Calu3 (cell line): ENCODE measurements at regions of chr5 and their contacts with region 1.

Region 1: DNA sequence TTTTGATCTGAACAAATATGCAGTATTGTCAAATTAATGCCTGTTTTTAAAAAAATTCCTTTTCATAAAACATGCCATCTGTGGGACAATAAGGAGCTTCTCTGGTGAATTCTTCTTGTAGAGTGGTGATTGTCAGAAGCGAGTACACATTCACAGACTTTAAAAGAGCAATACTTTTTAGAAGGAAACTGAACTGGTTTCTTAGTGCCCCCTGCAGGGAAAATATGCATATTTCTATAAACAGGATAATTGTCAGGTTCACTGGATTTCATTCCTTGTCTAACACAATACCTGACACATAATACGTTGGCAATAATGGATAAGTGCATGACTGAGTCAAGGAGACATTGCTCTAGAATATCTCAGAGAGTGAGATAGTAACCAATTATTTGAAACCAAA is 133.7 kb downstream of the KIF4B start:
- DNase-seq: no peak
- H3K4me3 Mint-ChIP-seq: no peak overlapping the region
- H3K27ac Mint-ChIP-seq: no peak overlapping the region
- H3K4me1 Mint-ChIP-seq: no peaks in the 10 kb centered on the region
- H3K27me3 Mint-ChIP-seq: peaks cover 43% of the 10 kb centered on the region
- CTCF ChIP-seq: no peak

Region 2: DNA sequence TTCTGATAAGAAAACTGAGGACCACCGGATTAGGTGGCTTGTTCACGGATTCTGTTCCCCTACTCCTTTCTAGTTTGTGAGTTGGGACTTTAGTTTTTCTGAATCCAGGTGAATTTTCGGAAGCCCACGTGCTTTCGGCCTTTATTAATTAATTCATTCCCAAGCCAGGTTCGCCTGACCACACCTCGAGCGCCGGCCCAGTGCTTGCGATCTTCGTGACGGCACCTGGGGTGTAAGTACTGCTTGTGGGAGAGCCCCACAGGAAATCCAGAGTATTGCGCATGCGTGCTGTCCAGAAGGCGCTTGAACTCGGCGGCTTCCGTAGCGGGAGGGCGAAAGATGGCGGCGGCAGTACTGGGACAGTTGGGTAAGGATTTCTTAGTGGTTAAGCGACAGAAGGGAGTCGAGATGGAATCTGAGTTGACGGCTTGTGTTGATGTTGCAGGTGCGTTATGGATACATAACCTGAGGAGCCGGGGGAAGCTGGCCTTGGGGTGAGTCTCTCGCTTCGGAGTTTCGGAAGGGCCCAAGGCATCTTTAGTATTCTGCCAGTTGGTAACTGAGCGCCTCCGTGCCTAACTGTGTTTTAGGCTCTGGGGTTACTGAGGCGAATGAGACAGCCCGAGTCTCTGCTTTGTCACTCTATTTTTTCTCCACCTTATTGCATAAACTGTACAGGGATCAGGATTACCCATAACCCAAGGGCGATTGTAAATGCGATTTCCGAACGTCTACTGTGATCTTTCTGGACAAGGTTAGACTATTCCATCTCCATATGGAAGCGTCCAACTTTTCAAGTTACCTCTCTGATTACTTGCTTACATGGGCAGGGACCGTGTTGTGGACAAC is 206.2 kb before region 1 on chr5 and contains the start of gene MRPL22:
- CTCF ChIA-PET with region 1: no interaction called
- intact Hi-C with region 1: loop called (anchors 10 kb)
- DNase-seq: peak; percentile 95
- H3K4me3 Mint-ChIP-seq: peak within 1 kb of the TSS; percentile 96
- H3K27ac Mint-ChIP-seq: peak within 1 kb of the TSS; percentile 94
- H3K4me1 Mint-ChIP-seq: peaks cover 8% of the 10 kb centered on the region
- H3K27me3 Mint-ChIP-seq: no peaks in the 10 kb centered on the region
- CTCF ChIP-seq: no peak
- total RNA-seq, gene MRPL22: 73.8 and 80.6 TPM in 2 replicates

Region 3: DNA sequence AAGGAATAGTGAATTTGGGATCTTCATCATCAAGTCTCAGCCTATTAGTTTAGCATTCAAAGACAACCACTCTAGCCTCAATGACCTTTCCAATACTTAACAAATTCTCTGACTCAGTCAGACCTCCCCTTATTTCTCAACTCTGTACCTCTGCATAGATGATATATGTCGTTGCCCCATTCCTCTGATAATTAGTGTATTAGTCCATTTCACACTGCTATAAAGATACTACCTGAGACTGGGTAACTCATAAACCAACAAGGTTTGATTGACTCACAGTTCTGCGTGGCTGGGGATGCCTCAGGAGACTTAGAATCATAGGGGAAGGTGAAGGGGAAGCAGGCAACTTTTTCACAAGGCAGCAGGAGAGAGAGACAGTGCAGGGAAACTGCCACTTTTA is 197.4 kb before region 1 on chr5:
- CTCF ChIA-PET with region 1: interaction called, 13 read pairs
- intact Hi-C with region 1: loop called (anchors 10 kb)
- DNase-seq: no peak
- H3K4me3 Mint-ChIP-seq: no peak overlapping the region
- H3K27ac Mint-ChIP-seq: no peak overlapping the region
- H3K4me1 Mint-ChIP-seq: no peaks in the 10 kb centered on the region
- H3K27me3 Mint-ChIP-seq: no peaks in the 10 kb centered on the region
- CTCF ChIP-seq: no peak

Region 4: DNA sequence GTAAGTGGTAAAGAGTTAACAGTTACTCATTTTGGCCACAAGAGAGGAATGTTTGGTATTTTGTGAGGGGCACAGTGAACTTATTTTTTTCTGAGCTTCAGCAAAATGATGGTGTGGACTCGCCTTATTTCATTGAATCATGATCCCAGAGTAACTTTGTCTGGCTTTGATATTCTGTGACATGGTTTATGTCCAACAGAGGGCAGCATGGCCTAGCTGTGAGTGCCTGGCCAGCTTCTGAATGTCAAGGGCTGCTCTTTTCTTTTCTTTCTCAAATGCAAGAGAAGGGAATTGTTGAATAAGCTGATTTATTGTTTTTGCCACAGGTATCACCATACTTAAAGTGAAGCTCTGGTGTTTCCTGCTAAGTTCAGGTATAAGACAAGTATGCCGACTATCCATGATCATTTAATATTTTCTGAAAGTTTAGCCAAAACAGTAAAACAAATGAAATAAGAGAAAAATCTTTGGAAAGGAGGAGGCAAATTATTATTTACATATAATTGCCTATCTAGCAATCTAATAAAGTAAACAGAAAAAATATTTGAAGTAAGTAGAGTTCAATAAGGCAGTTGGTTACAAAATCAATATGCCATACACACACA is 174.6 kb before region 1 on chr5:
- CTCF ChIA-PET with region 1: no interaction called
- intact Hi-C with region 1: loop called (anchors 2 kb)
- DNase-seq: peak; percentile 60
- H3K4me3 Mint-ChIP-seq: no peak overlapping the region
- H3K27ac Mint-ChIP-seq: no peak overlapping the region
- H3K4me1 Mint-ChIP-seq: no peaks in the 10 kb centered on the region
- H3K27me3 Mint-ChIP-seq: no peaks in the 10 kb centered on the region
- CTCF ChIP-seq: peak; percentile 50

Region 5: GRCh38 chr5:156824800-156825199 is 1677.6 kb after region 1 on chr5:
- CTCF ChIA-PET with region 1: no interaction called
- intact Hi-C with region 1: loop called (anchors 10 kb)
- DNase-seq: peak; percentile 36
- H3K4me3 Mint-ChIP-seq: no peak overlapping the region
- H3K27ac Mint-ChIP-seq: no peak overlapping the region
- H3K4me1 Mint-ChIP-seq: no peaks in the 10 kb centered on the region
- H3K27me3 Mint-ChIP-seq: no peaks in the 10 kb centered on the region
- CTCF ChIP-seq: no peak